H1 (cell line): ENCODE measurements at regions of chr19 and their contacts with region 1.

Region 1: DNA sequence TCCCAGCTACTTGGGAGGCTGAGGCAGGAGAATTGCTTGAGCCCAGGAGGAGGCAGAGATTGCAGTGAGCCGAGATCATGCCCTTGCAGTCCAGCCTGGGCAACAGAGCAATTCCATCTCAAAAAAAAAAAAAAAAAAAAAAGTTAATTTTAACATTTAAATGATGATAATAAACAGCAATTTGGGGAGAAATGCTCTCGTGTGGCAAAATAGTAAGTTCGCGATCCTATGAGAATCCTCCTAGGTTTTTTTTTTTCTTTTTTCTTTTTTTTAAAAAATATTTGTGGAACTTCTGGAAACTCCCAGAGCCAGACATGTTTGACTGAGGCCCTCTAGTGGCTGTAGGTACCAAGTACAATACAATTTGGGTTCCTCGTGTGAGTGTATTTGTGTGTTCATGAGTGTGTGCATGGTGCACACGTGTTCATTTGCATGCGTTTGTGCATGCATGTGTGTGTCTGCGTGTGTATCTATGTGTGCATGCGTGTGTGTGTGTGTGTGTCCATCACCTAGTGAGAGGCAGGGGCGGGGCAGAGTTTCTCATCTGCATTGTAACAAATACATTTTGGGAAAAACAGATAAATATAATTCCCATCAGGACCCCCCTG is 31.2 kb downstream of the TMPRSS9 start:
- DNase-seq: no peak
- H3K4me3 ChIP-seq: no peak overlapping the region
- H3K27ac ChIP-seq: no peak overlapping the region
- H3K4me1 ChIP-seq: no peaks in the 10 kb centered on the region
- H3K27me3 ChIP-seq: no peaks in the 10 kb centered on the region; a peak in 1 of 7 replicates
- CTCF ChIP-seq: peak in 2 of 3 experiments; percentile 62 to 74; a peak in 3 of 4 replicates
- EP300 ChIP-seq: no peak
- POLR2A ChIP-seq: no peak
- RAD21 ChIP-seq: peak; percentile 72 to 80

Region 2: DNA sequence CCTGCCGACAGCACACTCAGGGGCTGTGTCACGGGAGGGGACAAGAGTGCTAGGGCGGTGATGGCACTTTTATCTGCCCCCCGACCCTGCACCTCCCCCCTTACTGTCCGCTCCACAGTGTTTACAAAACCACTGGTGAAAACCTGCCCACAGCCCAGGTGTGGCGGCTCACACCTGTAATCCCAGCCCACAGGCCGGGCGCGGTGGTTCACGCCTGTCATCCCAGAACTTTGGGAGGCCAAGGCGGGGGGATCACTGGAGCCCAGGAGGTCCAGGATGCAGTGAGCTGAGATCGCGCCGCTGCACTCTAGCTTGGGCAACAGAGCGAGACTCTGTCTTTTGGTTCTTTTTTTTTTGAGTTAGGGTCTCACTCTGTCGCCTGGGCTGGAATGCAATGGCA is 95.1 kb before region 1 on chr19:
- CTCF ChIA-PET with region 1: no interaction called
- POLR2A ChIA-PET with region 1: no interaction called
- DNase-seq: no peak
- H3K4me3 ChIP-seq: no peak overlapping the region
- H3K27ac ChIP-seq: no peak overlapping the region
- H3K4me1 ChIP-seq: peaks cover 0 to 5% (median 3%) of the 10 kb centered on the region in 4 experiments; a peak in 3 of 7 replicates
- H3K27me3 ChIP-seq: peaks cover 14 to 23% (median 20%) of the 10 kb centered on the region in 4 experiments
- CTCF ChIP-seq: no peak
- EP300 ChIP-seq: no peak
- POLR2A ChIP-seq: no peak
- RAD21 ChIP-seq: no peak

Region 3: DNA sequence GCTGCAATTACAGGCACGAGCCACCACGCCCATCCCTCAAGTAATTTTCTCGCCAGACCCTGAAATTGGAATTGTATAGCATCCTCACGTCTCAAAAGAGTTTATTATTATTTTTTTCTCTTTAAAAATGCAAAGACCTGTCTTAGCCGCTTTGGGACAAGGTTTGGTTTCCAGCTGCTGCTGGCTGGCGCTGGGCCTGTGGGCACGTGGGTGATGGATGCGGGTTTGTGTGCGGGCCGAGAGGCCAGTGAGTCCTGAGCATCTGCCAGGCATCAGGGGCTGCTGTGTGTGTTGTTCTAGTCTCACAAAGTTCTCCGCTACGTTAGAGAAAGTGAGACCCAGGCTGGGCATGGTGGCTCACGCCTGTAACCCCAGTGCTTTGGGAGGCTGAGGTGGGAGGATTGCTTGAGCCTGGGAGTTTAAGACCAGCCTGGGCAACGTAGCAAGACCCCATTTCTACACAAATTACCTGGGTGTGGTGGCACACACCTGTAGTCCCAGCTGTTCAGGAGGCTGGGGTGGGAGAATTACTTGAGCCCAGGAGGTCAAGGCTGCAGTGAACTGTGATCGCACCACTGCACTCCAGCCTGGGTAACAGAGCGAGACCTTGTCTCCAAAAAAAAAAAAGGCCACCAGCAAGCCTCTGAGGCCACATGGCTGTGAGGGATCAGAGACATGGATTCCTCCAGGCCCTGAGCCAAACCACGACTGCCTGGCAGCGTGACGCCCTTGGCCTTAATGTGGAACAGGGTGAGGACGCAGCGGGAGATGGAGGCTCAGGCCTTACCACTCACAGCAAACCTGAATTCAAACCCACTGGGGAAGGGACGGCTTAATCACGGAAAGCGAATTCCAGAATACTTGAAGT is 35.8 kb before region 1 on chr19:
- CTCF ChIA-PET with region 1: interaction called, 18 read pairs
- POLR2A ChIA-PET with region 1: interaction called, 3 read pairs
- DNase-seq: no peak
- H3K4me3 ChIP-seq: no peak overlapping the region
- H3K27ac ChIP-seq: no peak overlapping the region
- H3K4me1 ChIP-seq: peaks cover 0 to 3% (median 0%) of the 10 kb centered on the region in 4 experiments; a peak in 1 of 7 replicates
- H3K27me3 ChIP-seq: peaks cover 0 to 3% (median under 1%) of the 10 kb centered on the region in 4 experiments; a peak in 4 of 7 replicates
- CTCF ChIP-seq: no peak
- EP300 ChIP-seq: no peak
- POLR2A ChIP-seq: no peak
- RAD21 ChIP-seq: no peak

Region 4: DNA sequence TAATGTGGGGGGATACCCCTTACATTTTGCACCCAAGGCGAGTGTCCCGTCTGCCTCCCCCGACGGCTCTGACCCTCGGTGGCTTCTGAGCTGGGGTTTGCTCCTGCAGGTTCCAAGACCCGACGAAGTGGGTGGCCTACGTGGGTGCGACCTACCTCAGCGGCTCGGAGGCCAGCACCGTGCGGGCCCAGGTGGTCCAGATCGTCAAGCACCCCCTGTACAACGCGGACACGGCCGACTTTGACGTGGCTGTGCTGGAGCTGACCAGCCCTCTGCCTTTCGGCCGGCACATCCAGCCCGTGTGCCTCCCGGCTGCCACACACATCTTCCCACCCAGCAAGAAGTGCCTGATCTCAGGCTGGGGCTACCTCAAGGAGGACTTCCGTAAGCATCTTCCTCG is 17.0 kb after region 1 on chr19:
- CTCF ChIA-PET with region 1: interaction called, 11 read pairs
- POLR2A ChIA-PET with region 1: interaction called, 11 read pairs
- DNase-seq: no peak
- H3K4me3 ChIP-seq: no peak overlapping the region
- H3K27ac ChIP-seq: no peak overlapping the region
- H3K4me1 ChIP-seq: no peaks in the 10 kb centered on the region
- H3K27me3 ChIP-seq: peaks cover 0 to 2% (median 0%) of the 10 kb centered on the region in 4 experiments; a peak in 3 of 7 replicates
- CTCF ChIP-seq: no peak
- EP300 ChIP-seq: no peak
- POLR2A ChIP-seq: no peak
- RAD21 ChIP-seq: no peak